PC-9 (cell line): ENCODE measurements at regions of chr17 and their contacts with region 1.

Region 1: GRCh38 chr17:77098884-77099545 is 41.8 kb upstream of the SEC14L1 start:
- DNase-seq: no peak
- H3K4me3 ChIP-seq: no peak overlapping the region
- H3K27ac ChIP-seq: no peak overlapping the region
- H3K4me1 ChIP-seq: peaks cover 5% of the 10 kb centered on the region; the same call in 1 of the 2 replicates
- H3K27me3 ChIP-seq: no peaks in the 10 kb centered on the region
- CTCF ChIP-seq: no peak

Region 2: GRCh38 chr17:77076124-77076872 is 22.7 kb before region 1 on chr17:
- CTCF ChIA-PET with region 1: no interaction called
- POLR2A ChIA-PET with region 1: no interaction called
- intact Hi-C with region 1: no loop called
- DNase-seq: no peak
- H3K4me3 ChIP-seq: no peak overlapping the region
- H3K27ac ChIP-seq: no peak overlapping the region
- H3K4me1 ChIP-seq: no peaks in the 10 kb centered on the region
- H3K27me3 ChIP-seq: peaks cover 7% of the 10 kb centered on the region
- CTCF ChIP-seq: no peak

Region 3: GRCh38 chr17:77124192-77124889 is 25.3 kb after region 1 on chr17:
- CTCF ChIA-PET with region 1: no interaction called
- POLR2A ChIA-PET with region 1: interaction called, 16 read pairs
- intact Hi-C with region 1: loop called (anchors 2 kb)
- DNase-seq: peak; percentile 69 to 87
- H3K4me3 ChIP-seq: peak overlapping the region; percentile 25; the same call in 1 of the 2 replicates
- H3K27ac ChIP-seq: peak overlapping the region; percentile 98
- H3K4me1 ChIP-seq: peaks cover 54% of the 10 kb centered on the region
- H3K27me3 ChIP-seq: no peaks in the 10 kb centered on the region
- CTCF ChIP-seq: no peak

Region 4: DNA sequence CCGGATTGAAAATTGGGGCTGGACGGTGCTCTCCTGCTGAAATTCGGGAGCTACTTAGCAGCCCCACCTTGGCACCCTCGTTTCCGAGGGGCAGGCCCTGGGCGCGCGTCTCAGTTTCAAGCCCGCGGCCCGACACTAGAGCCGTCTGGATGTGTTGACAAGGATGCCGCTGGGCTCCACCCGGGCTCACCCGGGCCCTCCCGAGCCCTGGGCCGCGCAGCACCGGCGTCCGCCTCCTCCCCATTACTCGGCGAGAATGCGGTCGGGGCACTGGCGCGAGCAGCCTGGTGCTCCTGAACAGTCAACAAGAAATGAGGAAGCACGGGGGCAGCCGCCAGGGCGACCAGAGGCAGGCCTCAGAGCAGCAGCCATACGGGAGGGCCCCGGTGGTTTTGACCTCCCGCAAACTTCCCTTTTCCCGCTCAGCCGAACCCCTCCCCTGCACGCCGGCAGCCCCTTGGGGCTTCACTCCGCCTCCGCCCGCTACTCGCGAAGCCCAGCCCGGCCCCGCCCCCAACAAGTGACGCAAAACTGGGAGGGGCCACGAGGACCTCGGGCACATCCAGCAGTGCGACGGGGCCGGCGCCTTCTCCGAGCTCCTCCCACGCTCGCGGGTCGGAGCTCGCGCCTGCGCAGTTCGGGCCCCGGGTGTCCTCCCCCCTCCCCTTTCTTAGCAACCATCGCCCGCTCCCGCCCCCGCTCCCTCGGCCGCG is 41.3 kb after region 1 on chr17:
- CTCF ChIA-PET with region 1: no interaction called
- POLR2A ChIA-PET with region 1: interaction called, 14 read pairs
- intact Hi-C with region 1: loop called (anchors 1 kb)
- DNase-seq: peak; percentile 81 to 98
- H3K4me3 ChIP-seq: peak overlapping the region; percentile 61
- H3K27ac ChIP-seq: peak overlapping the region; percentile 72
- H3K4me1 ChIP-seq: peaks cover 38% of the 10 kb centered on the region
- H3K27me3 ChIP-seq: no peaks in the 10 kb centered on the region
- CTCF ChIP-seq: no peak

Region 5: GRCh38 chr17:77145612-77146245 is 46.7 kb after region 1 on chr17:
- CTCF ChIA-PET with region 1: no interaction called
- POLR2A ChIA-PET with region 1: interaction called, 14 read pairs
- intact Hi-C with region 1: loop called (anchors 1 kb)
- DNase-seq: peak; percentile 56 to 76
- H3K4me3 ChIP-seq: peak overlapping the region; percentile 23; the same call in 1 of the 2 replicates
- H3K27ac ChIP-seq: peak overlapping the region; percentile 25; the same call in 1 of the 2 replicates
- H3K4me1 ChIP-seq: peaks cover 37% of the 10 kb centered on the region
- H3K27me3 ChIP-seq: no peaks in the 10 kb centered on the region
- CTCF ChIP-seq: no peak

Region 6: GRCh38 chr17:77280980-77281903 is 182.2 kb after region 1 on chr17:
- CTCF ChIA-PET with region 1: interaction called, 13 read pairs
- POLR2A ChIA-PET with region 1: no interaction called
- intact Hi-C with region 1: no loop called
- DNase-seq: peak; percentile 36 to 70
- H3K4me3 ChIP-seq: peak overlapping the region; percentile 90
- H3K27ac ChIP-seq: peak overlapping the region; percentile 65
- H3K4me1 ChIP-seq: peaks cover 49% of the 10 kb centered on the region
- H3K27me3 ChIP-seq: no peaks in the 10 kb centered on the region
- CTCF ChIP-seq: no peak